H1 (cell line): ENCODE measurements at regions of chr3 and their contacts with region 1.

Region 1: DNA sequence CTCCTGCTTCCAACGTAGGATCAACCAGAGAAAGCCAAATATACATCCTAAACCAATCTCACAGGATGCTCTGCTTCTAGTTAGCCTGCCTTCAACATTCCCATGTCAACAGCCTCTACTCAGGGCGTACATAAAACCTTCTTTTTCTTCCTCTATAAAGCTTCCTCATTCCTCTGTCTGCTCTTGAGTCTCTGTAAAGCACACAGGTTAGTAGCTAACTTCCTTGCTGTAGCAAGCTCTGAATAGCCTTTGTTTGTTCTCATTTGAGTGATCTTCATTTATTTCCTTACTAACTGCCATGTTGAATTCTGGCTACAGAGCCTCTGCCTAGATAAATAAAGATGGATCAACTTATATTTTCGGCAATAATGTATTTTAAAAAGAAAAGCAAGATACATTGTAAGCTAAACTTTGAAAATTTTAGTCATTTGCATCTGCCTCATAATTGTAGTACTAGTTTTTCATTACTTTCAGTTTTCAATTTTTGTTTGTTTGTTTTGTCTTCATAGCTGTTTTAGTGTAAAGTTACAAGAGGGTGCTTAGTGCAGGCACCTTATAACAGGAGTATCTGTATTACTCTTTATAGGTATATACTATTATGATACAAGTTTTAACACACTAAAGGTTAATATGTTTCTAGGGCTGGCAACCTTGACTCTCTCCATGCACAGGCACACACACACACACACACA is 498.2 kb downstream of the PYDC2 start:
- DNase-seq: no peak
- H3K4me3 ChIP-seq: no peak overlapping the region
- H3K27ac ChIP-seq: no peak overlapping the region
- H3K4me1 ChIP-seq: peaks cover 0 to 17% (median 14%) of the 10 kb centered on the region in 4 experiments; a peak in 4 of 7 replicates
- H3K27me3 ChIP-seq: no peaks in the 10 kb centered on the region
- CTCF ChIP-seq: no peak
- EP300 ChIP-seq: no peak
- POLR2A ChIP-seq: no peak
- RAD21 ChIP-seq: no peak

Region 2: GRCh38 chr3:191922570-191922969 is 36.6 kb before region 1 on chr3:
- CTCF ChIA-PET with region 1: interaction called, 3 read pairs
- POLR2A ChIA-PET with region 1: interaction called, 10 read pairs
- DNase-seq: no peak
- H3K4me3 ChIP-seq: peak overlapping the region in 1 of 4 experiments; percentile 30; a peak in 1 of 8 replicates
- H3K27ac ChIP-seq: no peak overlapping the region
- H3K4me1 ChIP-seq: peaks cover 0 to 6% (median 2%) of the 10 kb centered on the region in 4 experiments; a peak in 4 of 7 replicates
- H3K27me3 ChIP-seq: no peaks in the 10 kb centered on the region
- CTCF ChIP-seq: no peak
- EP300 ChIP-seq: no peak
- POLR2A ChIP-seq: no peak
- RAD21 ChIP-seq: no peak